ENCODE measurements at regions of chr7 and their contacts with region 1.

Region 1: GRCh38 chr7:38398725-38399321 is 125.4 kb upstream of the TARP start:
- DNase-seq: peak; percentile 52
- ATAC-seq: no peak
- H3K4me3 Mint-ChIP-seq: no peak overlapping the region
- H3K27ac Mint-ChIP-seq: no peak overlapping the region
- H3K4me1 Mint-ChIP-seq: peaks cover 2% of the 10 kb centered on the region
- H3K27me3 Mint-ChIP-seq: peaks cover 3% of the 10 kb centered on the region

Region 2: DNA sequence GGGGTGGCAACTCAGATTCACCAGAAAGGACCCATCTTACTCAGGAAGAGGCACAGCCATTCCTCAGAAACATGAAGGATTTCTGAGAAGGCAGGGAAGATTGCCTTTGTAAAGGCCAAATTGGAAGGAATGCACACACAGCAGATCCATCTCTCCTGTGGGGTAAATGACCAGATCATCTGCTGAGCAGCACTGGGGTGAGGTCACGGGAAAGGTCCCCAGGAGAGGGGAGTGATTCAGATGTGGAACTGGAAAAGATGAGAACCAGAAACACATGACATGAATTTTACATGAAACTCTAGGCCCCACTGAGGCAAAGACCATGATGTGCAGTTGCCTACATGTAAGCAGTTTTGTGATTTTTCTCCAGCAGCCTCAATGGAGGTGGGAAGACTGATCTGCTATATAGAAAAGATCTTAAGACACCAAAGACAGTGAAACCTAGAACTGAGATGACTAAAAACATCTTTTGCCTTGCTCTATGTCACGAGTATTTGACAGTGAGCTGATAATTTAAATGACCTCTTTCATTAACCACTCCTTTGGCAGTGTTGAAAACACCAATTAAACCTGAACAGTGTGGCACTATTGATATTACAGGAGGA is 140.8 kb after region 1 on chr7:
- CTCF ChIA-PET with region 1: interaction called, 10 read pairs
- DNase-seq: no peak
- ATAC-seq: no peak
- H3K4me3 Mint-ChIP-seq: no peak overlapping the region
- H3K27ac Mint-ChIP-seq: no peak overlapping the region
- H3K4me1 Mint-ChIP-seq: no peaks in the 10 kb centered on the region
- H3K27me3 Mint-ChIP-seq: peaks cover 17% of the 10 kb centered on the region

Region 3: DNA sequence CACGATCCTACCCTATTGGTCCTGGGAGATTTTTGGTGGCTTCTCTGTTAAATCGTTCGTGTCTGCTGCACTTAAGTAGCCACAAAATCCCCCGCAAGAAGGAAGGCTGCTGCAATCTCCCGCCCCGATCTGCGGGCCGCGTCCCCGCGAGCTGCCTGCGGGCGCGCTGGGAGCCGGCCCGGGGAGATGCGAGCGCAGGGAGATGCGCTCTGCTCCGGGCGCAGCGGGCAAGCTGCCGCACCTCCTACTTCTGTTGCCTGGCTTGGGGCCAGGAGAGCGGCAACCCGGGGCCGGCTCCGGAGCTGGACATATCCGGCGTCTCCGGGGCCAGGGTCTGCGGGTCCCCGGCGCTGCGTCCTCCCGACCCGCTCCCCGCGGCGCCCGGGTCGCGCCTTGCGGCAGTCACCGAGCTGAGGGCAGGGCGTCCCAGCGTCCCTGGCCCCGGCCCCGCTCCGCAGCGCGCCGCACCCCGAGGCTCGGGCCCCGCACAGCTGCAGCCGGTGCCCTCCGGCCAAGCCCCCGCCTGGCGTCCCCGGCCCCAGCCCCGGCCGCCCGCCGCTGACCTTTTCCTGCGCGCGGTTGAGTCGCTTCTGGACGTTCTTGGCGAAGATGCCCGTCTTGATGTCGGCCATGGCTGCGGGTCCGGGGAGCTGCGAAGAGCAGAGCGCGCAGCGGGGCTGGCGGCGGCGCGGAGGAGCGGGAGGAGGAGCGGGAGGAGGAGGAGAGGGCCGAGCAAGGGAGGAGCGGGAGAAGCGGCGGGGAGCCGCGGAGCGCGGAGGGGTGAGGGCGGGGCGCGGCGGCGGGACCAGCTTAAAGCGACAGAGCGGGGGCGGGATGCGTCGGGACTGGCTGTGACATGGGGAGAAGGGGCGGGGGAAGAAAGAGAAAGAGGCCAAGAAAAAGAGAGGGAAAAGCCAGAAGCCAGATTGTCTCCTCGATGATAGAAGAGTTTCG is 232.2 kb after region 1 on chr7 and contains the start of gene AMPH:
- CTCF ChIA-PET with region 1: interaction called, 14 read pairs
- DNase-seq: no peak
- ATAC-seq: peak; percentile 47
- H3K4me3 Mint-ChIP-seq: peak within 1 kb of the TSS; percentile 48
- H3K27ac Mint-ChIP-seq: no peak within 1 kb of the TSS
- H3K4me1 Mint-ChIP-seq: peaks cover 5% of the 10 kb centered on the region
- H3K27me3 Mint-ChIP-seq: peaks cover 59% of the 10 kb centered on the region
- total RNA-seq, gene AMPH: not detected

Region 4: GRCh38 chr7:38660427-38661099 is 261.7 kb after region 1 on chr7:
- CTCF ChIA-PET with region 1: interaction called, 37 read pairs
- DNase-seq: no peak
- ATAC-seq: peak; percentile 60
- H3K4me3 Mint-ChIP-seq: no peak overlapping the region
- H3K27ac Mint-ChIP-seq: no peak overlapping the region
- H3K4me1 Mint-ChIP-seq: no peaks in the 10 kb centered on the region
- H3K27me3 Mint-ChIP-seq: peaks cover 31% of the 10 kb centered on the region

Region 5: GRCh38 chr7:38806912-38807311 is 408.1 kb after region 1 on chr7:
- CTCF ChIA-PET with region 1: no interaction called
- DNase-seq: no peak
- ATAC-seq: no peak
- H3K4me3 Mint-ChIP-seq: no peak overlapping the region
- H3K27ac Mint-ChIP-seq: no peak overlapping the region
- H3K4me1 Mint-ChIP-seq: peaks cover 1% of the 10 kb centered on the region
- H3K27me3 Mint-ChIP-seq: no peaks in the 10 kb centered on the region

Measured in activated CD8-positive, alpha-beta memory T cell treated with anti-CD3 and anti-CD28 coated beads, Interleukin-2, amount 10 ng/mL, durations not matched to agents 7 days and 5 days (primary cell).